ENCODE measurements at regions of chr1 and their contacts with region 1.

Region 1: GRCh38 chr1:65278376-65279069 is 30.8 kb upstream of the DNAJC6 start:
- DNase-seq: no peak
- H3K4me3 ChIP-seq: no peak overlapping the region
- H3K27ac ChIP-seq: no peak overlapping the region
- H3K4me1 ChIP-seq: no peaks in the 10 kb centered on the region
- H3K27me3 ChIP-seq: no peaks in the 10 kb centered on the region
- CTCF ChIP-seq: no peak

Region 2: DNA sequence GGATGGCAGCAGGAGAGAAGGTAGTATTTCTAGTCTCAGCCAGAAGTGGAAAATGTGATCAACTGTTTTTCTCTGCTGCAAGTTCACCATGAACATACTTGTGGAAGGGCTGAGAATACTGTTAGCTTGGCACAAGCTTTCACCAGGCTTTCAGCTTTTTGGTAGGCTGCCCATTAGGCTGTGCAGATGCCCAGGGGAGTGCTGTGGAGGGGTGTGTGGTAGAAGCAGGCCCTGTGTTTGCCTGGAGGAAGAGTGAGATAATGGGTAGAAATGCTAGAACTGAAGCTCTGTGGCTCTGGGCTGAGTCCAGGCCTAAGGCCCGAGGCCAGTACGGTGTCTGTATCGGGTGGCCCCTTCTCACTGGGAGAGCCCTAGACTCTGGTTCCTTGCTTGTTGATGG is 40.6 kb after region 1 on chr1:
- CTCF ChIA-PET with region 1: no interaction called
- dilution Hi-C with region 1: loop called (anchors 5 kb)
- in situ Hi-C with region 1: no loop called
- intact Hi-C with region 1: no loop called
- DNase-seq: no peak
- H3K4me3 ChIP-seq: no peak overlapping the region
- H3K27ac ChIP-seq: no peak overlapping the region
- H3K4me1 ChIP-seq: no peaks in the 10 kb centered on the region
- H3K27me3 ChIP-seq: no peaks in the 10 kb centered on the region
- CTCF ChIP-seq: no peak

Region 3: DNA sequence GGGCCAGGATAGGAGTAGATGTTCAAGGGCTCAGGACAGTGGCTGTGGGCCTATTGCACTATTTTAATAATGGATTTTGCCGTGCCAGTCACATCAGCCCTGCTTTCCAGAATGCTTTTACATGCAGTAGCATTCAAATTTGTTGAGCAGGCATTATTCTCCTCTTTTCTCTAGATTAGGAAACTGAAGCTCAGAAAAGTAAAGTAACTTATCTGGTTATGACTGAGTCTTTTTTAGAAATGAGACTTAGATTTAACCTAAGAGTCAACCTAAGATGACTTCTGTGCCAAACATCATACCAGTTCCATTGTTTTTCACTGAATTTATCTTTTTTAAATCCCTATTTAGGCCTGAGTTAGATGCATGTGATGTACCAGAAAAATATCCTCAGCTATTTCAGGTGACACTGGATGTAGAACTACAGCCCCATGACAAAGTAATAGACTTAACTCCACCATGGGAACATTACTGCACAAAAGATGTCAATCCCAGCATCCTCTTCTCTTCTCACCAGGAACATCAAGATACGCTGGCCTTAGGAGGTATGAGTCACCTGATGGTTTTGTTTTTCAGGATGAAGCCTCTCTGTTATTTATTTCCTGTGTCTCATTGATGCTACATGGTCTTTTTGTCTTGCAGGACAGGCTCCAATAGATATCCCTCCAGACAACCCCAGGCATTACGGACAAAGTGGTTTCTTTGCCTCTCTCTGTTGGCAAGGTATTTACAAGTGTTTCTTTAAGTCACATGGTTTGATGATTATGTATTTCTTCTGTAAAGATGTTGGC is 110.6 kb after region 1 on chr1:
- CTCF ChIA-PET with region 1: no interaction called
- dilution Hi-C with region 1: loop called (anchors 5 kb)
- in situ Hi-C with region 1: no loop called
- intact Hi-C with region 1: no loop called
- DNase-seq: peak; percentile 23
- H3K4me3 ChIP-seq: no peak overlapping the region
- H3K27ac ChIP-seq: no peak overlapping the region
- H3K4me1 ChIP-seq: peaks cover 5% of the 10 kb centered on the region
- H3K27me3 ChIP-seq: no peaks in the 10 kb centered on the region
- CTCF ChIP-seq: no peak